ENCODE measurements at regions of chr10 and their contacts with region 1.

Region 1: GRCh38 chr10:12042797-12043651 is at the start of gene UPF2:
- DNase-seq: peak; percentile 94
- H3K4me3 ChIP-seq: peak within 1 kb of the TSS; percentile 100
- H3K27me3 ChIP-seq: no peaks in the 10 kb centered on the region
- CTCF ChIP-seq: no peak
- polyA plus RNA-seq, gene UPF2: 5.5 and 10.4 TPM in 2 replicates

Region 2: DNA sequence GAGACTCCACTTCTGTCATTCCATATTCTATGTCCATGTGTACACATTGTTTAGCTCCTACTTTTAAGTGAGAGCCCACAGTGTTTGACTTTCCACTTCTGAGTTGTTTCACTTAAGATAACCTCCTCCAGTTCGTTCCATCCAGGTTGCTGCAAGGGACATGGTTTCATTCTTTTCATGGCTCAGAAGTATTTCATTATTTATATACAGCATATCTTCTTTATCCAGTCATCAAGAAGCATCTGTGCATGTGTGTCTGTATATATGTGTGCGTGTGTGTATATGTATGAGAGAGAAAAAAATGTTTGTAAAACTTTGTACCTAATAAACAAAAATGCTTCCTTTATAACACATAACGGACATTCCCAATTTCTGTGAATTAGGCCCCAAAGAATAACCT is 92.6 kb after region 1 on chr10:
- CTCF ChIA-PET with region 1: no interaction called
- POLR2A ChIA-PET with region 1: interaction called, 13 read pairs
- DNase-seq: no peak
- H3K4me3 ChIP-seq: no peak overlapping the region
- H3K27me3 ChIP-seq: no peaks in the 10 kb centered on the region
- CTCF ChIP-seq: no peak